HEK293T (cell line): ENCODE measurements at regions of chr13 and their contacts with region 1.

Region 1: DNA sequence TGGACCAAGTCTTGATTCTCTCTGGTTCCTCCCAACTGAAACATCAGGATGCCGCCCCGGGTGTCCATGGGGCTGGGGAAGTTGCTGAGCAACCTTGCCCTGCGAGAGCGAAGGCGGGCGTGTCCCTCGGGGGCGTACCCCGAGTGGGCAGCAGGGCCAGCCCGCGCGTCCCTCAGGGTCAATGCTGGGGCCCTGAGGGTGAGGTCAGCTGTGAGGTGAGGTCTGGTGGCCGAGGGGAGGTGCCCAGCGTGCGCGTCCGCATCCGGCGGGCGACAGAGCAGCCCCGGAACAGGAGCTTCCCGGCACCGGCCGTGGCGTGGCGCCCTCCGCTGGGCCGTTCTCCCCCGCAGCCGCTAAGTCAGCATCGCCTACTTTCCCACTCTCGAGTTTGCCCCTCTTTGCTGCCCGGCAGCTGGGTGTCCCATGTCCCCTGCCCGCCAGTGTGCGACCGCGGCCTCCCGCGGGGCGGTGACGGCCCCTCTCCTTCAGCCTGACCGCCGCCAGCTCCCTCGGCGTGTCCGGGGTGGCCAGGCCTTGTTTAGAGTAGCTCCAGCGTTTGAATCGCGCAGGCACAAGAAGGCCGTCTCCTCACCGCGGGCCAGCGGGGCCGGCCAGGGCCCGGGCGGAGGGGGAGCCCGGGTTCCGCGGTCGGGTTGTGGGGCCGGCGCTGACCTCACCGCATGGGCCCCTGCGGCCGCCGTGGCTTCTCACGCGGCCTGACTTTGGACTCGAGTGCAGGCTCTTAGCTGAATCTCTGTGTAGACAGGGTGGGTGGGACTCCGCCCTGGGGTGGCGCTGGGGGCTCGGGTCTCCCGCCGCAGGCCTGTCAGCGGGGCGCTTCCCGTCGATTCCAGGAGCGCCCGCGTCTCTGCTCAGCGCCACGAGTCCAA is 33.0 kb downstream of the GJA3 start:
- DNase-seq: peak; percentile 46

Region 2: DNA sequence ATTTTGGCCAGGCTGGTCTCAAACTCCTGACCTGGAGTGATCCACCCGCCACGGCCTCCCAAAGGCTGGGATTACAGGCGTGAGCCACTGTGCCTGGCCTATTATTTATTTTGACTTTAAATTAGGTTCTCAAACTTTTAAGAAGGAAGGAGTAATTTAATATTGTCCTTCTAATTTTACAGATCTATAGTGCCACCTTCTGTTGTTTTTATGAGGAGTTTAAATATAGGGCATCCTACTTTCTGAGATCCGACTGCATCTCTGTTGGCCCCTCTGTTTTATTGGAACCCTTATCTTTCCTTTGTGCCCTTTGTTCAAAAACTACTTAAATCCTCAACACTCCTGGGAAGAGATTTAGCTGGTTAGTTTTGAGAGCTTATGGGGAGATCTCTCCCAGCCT is 239.0 kb before region 1 on chr13:
- CTCF ChIA-PET with region 1: no interaction called
- POLR2A ChIA-PET with region 1: no interaction called
- DNase-seq: no peak

Region 3: GRCh38 chr13:20141238-20142022 is 13.6 kb after region 1 on chr13:
- CTCF ChIA-PET with region 1: interaction called, 4 read pairs
- POLR2A ChIA-PET with region 1: interaction called, 20 read pairs
- DNase-seq: peak; percentile 34

Region 4: DNA sequence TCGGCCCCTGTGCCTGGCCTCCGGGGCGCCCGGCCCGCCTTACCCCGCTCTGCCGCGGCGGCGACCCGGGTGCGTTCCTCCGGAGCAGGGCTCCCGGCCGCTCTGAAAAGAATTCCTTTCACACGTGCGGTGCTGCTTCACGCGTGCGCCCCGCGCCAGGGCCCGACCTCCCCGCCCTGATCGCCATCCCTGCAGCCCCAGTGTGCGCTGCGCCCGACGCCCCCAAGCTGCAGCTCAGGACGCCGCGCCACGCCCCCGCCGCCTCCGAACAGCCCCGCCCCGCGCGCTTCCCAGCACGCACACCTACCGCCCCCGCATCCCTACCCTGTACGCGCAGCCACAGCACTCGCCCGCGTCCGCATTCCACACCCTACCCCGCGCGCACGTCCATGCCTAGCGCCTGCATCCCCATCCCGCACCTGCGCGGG is 33.0 kb after region 1 on chr13 and contains the start of gene GJA3:
- CTCF ChIA-PET with region 1: interaction called, 7 read pairs
- POLR2A ChIA-PET with region 1: interaction called, 18 read pairs
- DNase-seq: peak; percentile 25

Region 5: GRCh38 chr13:20359335-20359734 is 231.5 kb after region 1 on chr13:
- CTCF ChIA-PET with region 1: no interaction called
- POLR2A ChIA-PET with region 1: no interaction called
- DNase-seq: no peak